Keratinocyte (primary cell): ENCODE measurements at regions of chr22 and their contacts with region 1.

Region 1: GRCh38 chr22:21857481-21857914 is 9.9 kb downstream of the MAPK1 start:
- DNase-seq: no peak
- H3K4me3 ChIP-seq: no peak overlapping the region
- H3K27ac ChIP-seq: no peak overlapping the region
- H3K4me1 ChIP-seq: peaks cover 11% of the 10 kb centered on the region
- H3K27me3 ChIP-seq: no peaks in the 10 kb centered on the region
- CTCF ChIP-seq: no peak

Region 2: DNA sequence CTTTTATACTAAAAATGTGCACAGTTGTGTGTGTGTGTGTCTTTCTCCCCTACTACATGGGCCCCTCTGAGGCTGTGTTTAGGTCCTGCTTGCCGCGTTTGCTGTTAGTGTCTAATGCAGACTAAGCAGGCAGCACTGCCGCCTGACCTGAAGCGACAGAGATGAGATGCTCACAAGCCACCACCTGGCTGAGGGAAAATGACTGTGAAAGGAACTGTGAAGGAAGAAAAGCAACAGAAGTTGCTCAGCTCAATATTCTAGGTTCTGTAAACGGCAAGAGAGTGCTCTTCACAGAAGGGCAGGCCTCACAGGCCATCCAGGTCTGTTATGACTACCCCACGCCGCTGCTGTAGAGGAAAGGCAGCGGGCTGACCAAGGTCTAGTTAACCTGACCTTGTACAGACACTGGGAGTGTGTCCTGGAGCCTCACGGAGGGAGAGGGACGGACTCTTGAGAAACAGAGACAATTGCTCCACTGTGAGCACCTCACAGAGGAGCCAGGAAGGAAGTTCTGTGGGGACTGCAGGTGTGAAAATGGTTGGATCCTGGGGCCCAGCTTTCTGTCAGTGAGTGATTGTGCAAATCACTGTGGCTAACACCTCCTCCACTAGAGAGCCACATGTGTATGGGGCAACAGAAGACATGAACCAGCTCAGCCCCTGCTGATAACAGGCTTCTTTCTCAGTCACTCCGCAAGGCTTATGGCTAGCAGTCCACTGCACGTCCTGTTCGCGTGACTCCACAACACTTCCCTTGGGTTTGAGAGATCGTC is 90.6 kb before region 1 on chr22:
- dilution Hi-C with region 1: no loop called
- DNase-seq: no peak
- H3K4me3 ChIP-seq: no peak overlapping the region
- H3K27ac ChIP-seq: no peak overlapping the region
- H3K4me1 ChIP-seq: peaks cover 10% of the 10 kb centered on the region
- H3K27me3 ChIP-seq: no peaks in the 10 kb centered on the region
- CTCF ChIP-seq: no peak

Region 3: GRCh38 chr22:21938071-21938822 is 80.7 kb after region 1 on chr22:
- dilution Hi-C with region 1: loop called (anchors 10 kb)
- DNase-seq: no peak
- H3K4me3 ChIP-seq: peak overlapping the region; percentile 22 to 80 (median 50)
- H3K27ac ChIP-seq: peak overlapping the region; percentile 89
- H3K4me1 ChIP-seq: peaks cover 46% of the 10 kb centered on the region
- H3K27me3 ChIP-seq: no peaks in the 10 kb centered on the region
- CTCF ChIP-seq: peak; percentile 97 to 100 (median 99)